A549 (cell line): ENCODE measurements at regions of chr7 and their contacts with region 1.

Region 1: GRCh38 chr7:108452722-108453121 is 3.5 kb downstream of the NRCAM start:
- DNase-seq: peak; percentile 52 to 63
- ATAC-seq: peak in 1 of 2 experiments; percentile 18; a peak in 2 of 6 replicates
- H3K4me3 ChIP-seq: peak overlapping the region; percentile 76; the same call in 1 of the 3 replicates
- H3K27ac ChIP-seq: peak overlapping the region; percentile 44 to 90; a peak in 4 of 6 replicates
- H3K4me1 ChIP-seq: peaks cover 76% of the 10 kb centered on the region
- CTCF ChIP-seq: peak; percentile 56
- EP300 ChIP-seq: no peak
- POLR2A ChIP-seq: no peak
- RAD21 ChIP-seq: peak; percentile 43 to 50

Region 2: DNA sequence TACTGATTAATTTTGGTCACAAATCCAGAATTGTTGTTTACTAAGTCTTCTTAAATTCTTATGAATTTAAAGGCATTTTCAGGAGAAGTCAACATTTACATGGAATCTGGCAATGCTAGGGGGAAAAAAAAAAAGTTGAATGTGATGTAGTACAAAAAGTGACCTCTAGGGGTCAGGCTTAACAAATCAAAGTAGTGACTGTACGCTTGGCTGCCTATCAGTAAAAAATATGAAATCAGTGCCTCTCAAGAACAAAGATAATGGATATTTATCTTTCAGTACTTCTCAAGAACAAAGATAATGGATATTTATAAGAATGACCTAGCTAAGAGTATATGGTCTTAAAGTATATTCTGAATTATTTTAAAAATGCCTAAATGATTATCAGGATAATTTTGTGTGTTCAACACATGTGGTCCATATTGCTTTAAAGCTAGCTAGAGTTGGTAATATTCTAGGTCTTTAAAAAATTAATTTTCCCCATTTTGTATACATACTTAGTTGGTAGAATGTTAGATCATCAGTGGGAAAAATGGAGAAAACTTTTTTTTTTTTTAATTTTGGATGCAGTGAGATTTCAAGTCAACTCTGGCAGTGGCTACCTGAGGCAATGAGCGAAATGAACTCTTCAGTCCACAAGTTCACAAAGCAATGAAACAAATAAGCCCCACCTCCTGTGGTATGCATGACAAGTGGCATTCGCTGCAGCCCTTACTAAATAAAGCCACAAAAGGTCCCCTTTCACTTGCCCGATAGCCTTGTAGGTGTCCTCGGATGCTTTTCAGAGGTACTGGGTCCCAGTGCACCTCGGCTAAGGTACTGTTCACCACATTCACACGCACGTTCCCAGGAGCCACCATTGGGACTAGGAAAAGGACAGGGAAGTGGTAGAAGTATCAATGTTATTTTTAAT is 271.4 kb before region 1 on chr7:
- CTCF ChIA-PET with region 1: interaction called, 14 read pairs
- POLR2A ChIA-PET with region 1: interaction called, 3 read pairs
- DNase-seq: peak; percentile 39 to 73
- ATAC-seq: peak; percentile 65 to 78; a peak in 5 of 6 replicates
- H3K4me3 ChIP-seq: no peak overlapping the region
- H3K27ac ChIP-seq: peak overlapping the region; percentile 62 to 63; a peak in 5 of 6 replicates
- H3K4me1 ChIP-seq: peaks cover 12% of the 10 kb centered on the region
- CTCF ChIP-seq: peak; percentile 91
- EP300 ChIP-seq: no peak
- POLR2A ChIP-seq: no peak
- RAD21 ChIP-seq: peak; percentile 92 to 93

Region 3: GRCh38 chr7:108430664-108431063 is 22.1 kb before region 1 on chr7:
- CTCF ChIA-PET with region 1: interaction called, 12 read pairs
- POLR2A ChIA-PET with region 1: no interaction called
- DNase-seq: no peak
- ATAC-seq: no peak
- H3K4me3 ChIP-seq: no peak overlapping the region
- H3K27ac ChIP-seq: no peak overlapping the region
- H3K4me1 ChIP-seq: peaks cover 65% of the 10 kb centered on the region
- CTCF ChIP-seq: no peak
- EP300 ChIP-seq: no peak
- POLR2A ChIP-seq: no peak
- RAD21 ChIP-seq: no peak

Region 4: DNA sequence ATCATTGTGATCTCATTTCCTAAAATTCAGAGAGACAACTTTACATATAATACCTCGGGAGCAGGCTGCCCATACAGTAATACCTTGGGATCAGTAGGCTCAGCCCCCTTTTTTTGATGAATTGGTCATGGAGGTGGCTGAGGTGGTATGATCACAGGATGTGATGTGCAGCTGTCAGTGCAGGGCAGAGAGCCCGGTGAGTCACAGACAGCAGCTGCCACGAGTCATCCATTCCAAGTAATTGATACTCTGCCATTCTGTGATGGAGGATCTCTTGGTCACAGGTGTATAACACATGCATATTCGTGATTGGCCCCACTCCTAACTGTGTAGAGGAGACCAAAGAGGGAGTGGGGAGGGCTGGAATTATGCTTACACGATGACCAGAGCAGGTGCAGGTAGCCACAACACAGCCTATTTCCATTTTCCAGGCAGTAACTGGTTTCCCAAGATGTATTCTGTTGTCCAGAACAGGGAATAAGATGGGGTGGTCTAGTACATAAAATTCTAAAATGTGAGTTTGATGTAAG is 10.6 kb before region 1 on chr7:
- CTCF ChIA-PET with region 1: interaction called, 19 read pairs
- POLR2A ChIA-PET with region 1: no interaction called
- DNase-seq: peak; percentile 33 to 39
- ATAC-seq: peak; percentile 62 to 71
- H3K4me3 ChIP-seq: no peak overlapping the region
- H3K27ac ChIP-seq: 0 out of 6 replicates have a peak overlapping the region, but pooled peaks of 1 of the 2 experiments have one; percentile 38
- H3K4me1 ChIP-seq: peaks cover 59% of the 10 kb centered on the region
- CTCF ChIP-seq: no peak
- EP300 ChIP-seq: no peak
- POLR2A ChIP-seq: no peak
- RAD21 ChIP-seq: no peak